MCF 10A (cell line): ENCODE measurements at regions of chr13 and their contacts with region 1.

Region 1: GRCh38 chr13:110412132-110412914 is 105.2 kb downstream of the COL4A2 start:
- DNase-seq: peak; percentile 99
- H3K4me3 Mint-ChIP-seq: no peak overlapping the region
- H3K27ac Mint-ChIP-seq: peak overlapping the region; percentile 76
- H3K4me1 Mint-ChIP-seq: peaks cover 40% of the 10 kb centered on the region
- H3K27me3 Mint-ChIP-seq: no peaks in the 10 kb centered on the region
- CTCF ChIP-seq: peak; percentile 90

Region 2: GRCh38 chr13:109700176-109700575 is 712.1 kb before region 1 on chr13:
- CTCF ChIA-PET with region 1: no interaction called
- POLR2A ChIA-PET with region 1: no interaction called
- intact Hi-C with region 1: no loop called
- DNase-seq: peak; percentile 74
- H3K4me3 Mint-ChIP-seq: no peak overlapping the region
- H3K27ac Mint-ChIP-seq: peak overlapping the region; percentile 81
- H3K4me1 Mint-ChIP-seq: peaks cover 32% of the 10 kb centered on the region
- H3K27me3 Mint-ChIP-seq: no peaks in the 10 kb centered on the region
- CTCF ChIP-seq: no peak

Region 3: DNA sequence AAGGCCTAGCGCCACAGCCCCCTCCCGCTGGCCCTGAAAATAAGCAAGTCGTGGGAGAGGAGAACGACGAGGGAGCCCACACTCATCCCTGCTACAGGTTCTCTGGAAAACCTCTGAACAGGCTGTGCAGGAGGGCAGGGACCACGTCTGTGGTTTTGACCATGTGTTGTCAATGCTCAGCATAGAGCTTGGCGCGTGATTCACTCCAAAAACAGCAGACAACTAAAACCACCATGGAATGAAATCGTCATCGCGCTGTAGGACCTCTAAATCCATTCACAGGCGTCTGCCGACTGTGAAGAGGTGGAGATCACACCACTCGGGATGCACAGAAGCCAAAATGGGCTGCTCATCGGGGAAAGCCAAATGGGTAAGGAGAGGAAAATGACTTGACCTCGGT is 226.6 kb before region 1 on chr13:
- CTCF ChIA-PET with region 1: no interaction called
- POLR2A ChIA-PET with region 1: no interaction called
- intact Hi-C with region 1: no loop called
- DNase-seq: no peak
- H3K4me3 Mint-ChIP-seq: no peak overlapping the region
- H3K27ac Mint-ChIP-seq: no peak overlapping the region
- H3K4me1 Mint-ChIP-seq: no peaks in the 10 kb centered on the region
- H3K27me3 Mint-ChIP-seq: no peaks in the 10 kb centered on the region
- CTCF ChIP-seq: no peak

Region 4: DNA sequence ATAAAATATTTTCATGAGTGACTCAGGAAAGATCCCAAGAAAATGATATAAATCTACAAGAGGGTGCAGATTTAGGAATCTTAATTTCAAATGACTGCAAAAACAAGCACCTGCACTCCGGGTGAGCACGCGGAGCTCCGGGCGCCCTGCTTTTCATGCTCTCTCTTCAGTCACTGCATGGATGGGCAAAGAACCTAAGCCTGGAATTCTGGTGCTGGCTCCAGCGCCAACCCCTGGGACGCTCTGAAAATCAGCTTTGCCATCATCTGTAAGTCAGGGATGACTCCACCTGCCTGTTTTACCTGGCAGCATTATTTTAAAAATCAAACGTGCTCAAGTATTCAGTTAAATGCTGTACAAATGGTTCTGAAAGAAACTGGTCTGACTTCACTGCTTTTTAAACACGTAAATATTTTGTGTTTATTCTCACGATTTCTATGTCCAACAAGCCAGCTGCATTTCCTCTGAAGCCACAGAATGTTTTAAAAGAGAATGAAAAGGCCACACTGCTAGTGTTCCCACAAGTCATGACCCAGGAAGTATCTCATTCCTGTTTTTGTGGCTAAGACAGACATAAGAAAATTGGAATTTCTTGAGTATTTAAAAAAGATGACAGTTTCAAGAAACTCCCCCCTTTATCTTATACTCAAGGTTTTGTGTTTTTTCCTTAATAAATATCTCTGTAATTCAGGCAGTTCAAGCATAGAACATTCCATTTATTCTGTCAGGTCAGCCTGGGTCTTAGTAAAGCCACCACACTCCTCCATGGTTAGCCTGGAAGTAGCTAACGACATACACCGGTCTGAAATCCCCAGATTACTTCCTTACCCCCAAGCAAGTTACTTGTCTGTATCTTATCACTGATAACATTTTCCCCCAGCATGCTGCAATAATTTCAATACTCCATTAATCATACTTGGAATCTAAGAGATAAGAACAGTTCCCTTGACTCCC is 186.4 kb before region 1 on chr13:
- CTCF ChIA-PET with region 1: interaction called, 32 read pairs
- POLR2A ChIA-PET with region 1: interaction called, 9 read pairs
- intact Hi-C with region 1: loop called (anchors 1 kb)
- DNase-seq: no peak
- H3K4me3 Mint-ChIP-seq: no peak overlapping the region
- H3K27ac Mint-ChIP-seq: no peak overlapping the region
- H3K4me1 Mint-ChIP-seq: peaks cover 5% of the 10 kb centered on the region
- H3K27me3 Mint-ChIP-seq: no peaks in the 10 kb centered on the region
- CTCF ChIP-seq: no peak

Region 5: DNA sequence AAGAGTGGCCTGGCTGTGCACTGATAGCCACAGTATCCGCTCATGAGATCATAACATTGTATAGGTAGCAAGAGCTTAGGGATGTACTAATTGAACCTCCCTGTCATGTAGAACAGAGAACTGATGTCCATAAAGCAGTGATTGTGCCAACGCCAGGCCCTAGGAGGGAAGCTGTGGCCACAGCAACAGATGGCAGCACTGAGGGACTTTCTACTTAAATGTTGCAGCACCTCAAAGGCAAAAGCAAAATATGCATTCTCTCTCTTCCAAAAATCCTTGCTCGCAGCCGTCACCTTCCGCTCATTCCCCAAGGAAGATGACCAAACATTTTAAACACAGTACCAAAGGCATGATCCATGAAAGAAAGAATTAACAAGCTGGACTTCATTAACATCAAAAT is 137.6 kb before region 1 on chr13:
- CTCF ChIA-PET with region 1: interaction called, 4 read pairs
- POLR2A ChIA-PET with region 1: no interaction called
- intact Hi-C with region 1: loop called (anchors 1 kb)
- DNase-seq: peak; percentile 15
- H3K4me3 Mint-ChIP-seq: no peak overlapping the region
- H3K27ac Mint-ChIP-seq: no peak overlapping the region
- H3K4me1 Mint-ChIP-seq: no peaks in the 10 kb centered on the region
- H3K27me3 Mint-ChIP-seq: no peaks in the 10 kb centered on the region
- CTCF ChIP-seq: peak; percentile 20

Region 6: DNA sequence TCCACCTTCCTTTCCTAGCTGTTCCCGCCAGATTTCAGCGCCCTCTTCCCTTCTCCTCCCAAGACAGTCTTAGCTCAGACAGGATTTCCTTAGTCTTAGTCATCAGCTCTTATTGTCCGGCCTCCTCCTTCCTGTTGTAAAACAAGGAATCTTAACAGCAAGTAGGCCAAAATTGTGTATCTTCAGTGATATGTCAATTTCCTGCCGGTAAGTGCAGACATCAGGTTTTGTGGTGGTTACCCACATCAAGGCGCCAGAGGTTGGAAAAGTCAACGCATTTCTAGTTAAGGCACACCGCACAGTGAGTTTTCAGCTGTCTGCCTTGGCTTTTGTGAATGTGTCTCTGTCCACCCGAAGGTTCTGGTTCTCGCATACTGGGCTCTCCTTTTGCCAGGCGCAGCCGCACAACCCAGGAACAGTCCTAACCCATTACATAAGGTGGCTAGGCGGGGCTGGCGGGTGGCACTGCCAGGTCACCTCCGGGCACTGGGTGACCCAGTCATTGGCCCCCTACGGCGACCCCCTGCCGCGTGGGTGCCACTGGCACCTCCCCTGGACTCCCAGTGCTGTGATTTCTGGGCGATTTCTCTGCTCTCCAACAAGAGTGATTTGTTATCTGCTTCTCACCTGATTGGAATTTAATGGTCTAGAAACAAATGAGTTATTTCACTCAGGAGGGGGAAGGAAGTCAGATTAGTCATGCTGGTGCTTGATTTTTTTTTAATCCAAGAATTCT is 92.4 kb before region 1 on chr13:
- CTCF ChIA-PET with region 1: interaction called, 3 read pairs
- POLR2A ChIA-PET with region 1: interaction called, 6 read pairs
- intact Hi-C with region 1: loop called (anchors 1 kb)
- DNase-seq: peak; percentile 83
- H3K4me3 Mint-ChIP-seq: peak overlapping the region; percentile 68
- H3K27ac Mint-ChIP-seq: peak overlapping the region; percentile 95
- H3K4me1 Mint-ChIP-seq: peaks cover 20% of the 10 kb centered on the region
- H3K27me3 Mint-ChIP-seq: no peaks in the 10 kb centered on the region
- CTCF ChIP-seq: no peak

Region 7: DNA sequence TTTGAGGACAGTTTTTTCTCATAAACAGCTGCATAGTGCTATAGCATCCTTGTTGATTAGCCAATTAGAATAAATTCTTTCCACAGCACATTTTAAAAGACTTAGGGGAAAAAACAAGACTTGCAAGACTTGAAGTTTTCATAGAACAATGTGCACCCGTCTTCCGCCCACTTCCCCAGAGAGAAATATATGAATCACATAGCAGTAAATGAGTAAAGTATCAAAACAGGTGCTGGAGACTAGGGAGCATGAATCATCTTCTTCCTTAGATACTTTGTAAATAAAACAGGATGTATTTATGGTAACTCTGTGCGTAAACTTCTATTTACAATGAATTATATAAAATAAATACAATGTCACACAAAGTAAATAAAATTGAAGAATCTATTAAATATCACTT is 30.1 kb before region 1 on chr13:
- CTCF ChIA-PET with region 1: interaction called, 4 read pairs
- POLR2A ChIA-PET with region 1: no interaction called
- intact Hi-C with region 1: loop called (anchors 1 kb)
- DNase-seq: peak; percentile 71
- H3K4me3 Mint-ChIP-seq: no peak overlapping the region
- H3K27ac Mint-ChIP-seq: peak overlapping the region; percentile 8
- H3K4me1 Mint-ChIP-seq: peaks cover 16% of the 10 kb centered on the region
- H3K27me3 Mint-ChIP-seq: no peaks in the 10 kb centered on the region
- CTCF ChIP-seq: no peak

Region 8: GRCh38 chr13:110593430-110594130 is 181.3 kb after region 1 on chr13:
- CTCF ChIA-PET with region 1: no interaction called
- POLR2A ChIA-PET with region 1: no interaction called
- intact Hi-C with region 1: no loop called
- DNase-seq: peak; percentile 64
- H3K4me3 Mint-ChIP-seq: no peak overlapping the region
- H3K27ac Mint-ChIP-seq: no peak overlapping the region
- H3K4me1 Mint-ChIP-seq: peaks cover 10% of the 10 kb centered on the region
- H3K27me3 Mint-ChIP-seq: no peaks in the 10 kb centered on the region
- CTCF ChIP-seq: peak; percentile 55